Motor neuron (in vitro differentiated cells): ENCODE measurements at regions of chr2 and their contacts with region 1.

Region 1: DNA sequence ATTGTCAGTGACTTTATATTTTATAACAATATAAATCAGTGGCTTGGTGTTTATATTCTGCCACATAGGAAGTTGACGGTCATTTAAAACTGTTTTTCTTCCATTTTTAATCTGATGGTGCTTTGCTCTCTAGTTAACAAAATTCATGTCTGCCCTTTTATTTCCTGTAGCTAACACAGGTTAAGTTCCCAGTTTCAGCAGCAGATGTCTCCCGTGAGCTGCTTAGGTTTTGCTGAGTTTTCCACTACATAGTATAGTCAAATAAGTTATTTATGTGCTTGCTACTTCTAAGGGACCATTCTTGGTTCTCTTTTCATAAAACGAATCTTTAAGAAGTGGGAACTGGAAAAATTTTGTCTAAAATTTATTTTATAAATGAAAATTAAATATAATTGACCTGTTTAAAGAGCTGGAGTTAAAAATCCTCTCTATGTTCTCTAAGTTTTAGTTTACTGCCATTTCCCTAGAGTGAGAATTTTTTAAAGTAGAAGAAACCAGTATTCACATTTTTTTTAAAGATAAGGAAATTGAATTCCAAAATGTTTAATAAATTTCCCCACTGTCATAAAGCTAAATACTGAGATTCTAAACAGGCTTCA is 20.6 kb downstream of the HTR2B start:
- ATAC-seq: peak in 6 of 8 experiments; percentile 34 to 84 (median 66)
- H3K4me3 ChIP-seq: no peak overlapping the region
- H3K27ac ChIP-seq: no peak overlapping the region
- H3K4me1 ChIP-seq: no peaks in the 10 kb centered on the region

Region 2: GRCh38 chr2:231198291-231199173 is 94.3 kb after region 1 on chr2 and contains the start of gene ARMC9:
- in situ Hi-C with region 1: loop called in 1 of 9 experiments (anchors 10 kb)
- ATAC-seq: peak; percentile 78 to 97 (median 96)
- H3K4me3 ChIP-seq: peak within 1 kb of the TSS; percentile 63 to 92 (median 79)
- H3K27ac ChIP-seq: peak within 1 kb of the TSS; percentile 53 to 56
- H3K4me1 ChIP-seq: peaks cover 10 to 11% of the 10 kb centered on the region in 2 donors
- total RNA-seq, gene ARMC9: 7.2 to 22.6 (median 18.3) TPM

Region 3: DNA sequence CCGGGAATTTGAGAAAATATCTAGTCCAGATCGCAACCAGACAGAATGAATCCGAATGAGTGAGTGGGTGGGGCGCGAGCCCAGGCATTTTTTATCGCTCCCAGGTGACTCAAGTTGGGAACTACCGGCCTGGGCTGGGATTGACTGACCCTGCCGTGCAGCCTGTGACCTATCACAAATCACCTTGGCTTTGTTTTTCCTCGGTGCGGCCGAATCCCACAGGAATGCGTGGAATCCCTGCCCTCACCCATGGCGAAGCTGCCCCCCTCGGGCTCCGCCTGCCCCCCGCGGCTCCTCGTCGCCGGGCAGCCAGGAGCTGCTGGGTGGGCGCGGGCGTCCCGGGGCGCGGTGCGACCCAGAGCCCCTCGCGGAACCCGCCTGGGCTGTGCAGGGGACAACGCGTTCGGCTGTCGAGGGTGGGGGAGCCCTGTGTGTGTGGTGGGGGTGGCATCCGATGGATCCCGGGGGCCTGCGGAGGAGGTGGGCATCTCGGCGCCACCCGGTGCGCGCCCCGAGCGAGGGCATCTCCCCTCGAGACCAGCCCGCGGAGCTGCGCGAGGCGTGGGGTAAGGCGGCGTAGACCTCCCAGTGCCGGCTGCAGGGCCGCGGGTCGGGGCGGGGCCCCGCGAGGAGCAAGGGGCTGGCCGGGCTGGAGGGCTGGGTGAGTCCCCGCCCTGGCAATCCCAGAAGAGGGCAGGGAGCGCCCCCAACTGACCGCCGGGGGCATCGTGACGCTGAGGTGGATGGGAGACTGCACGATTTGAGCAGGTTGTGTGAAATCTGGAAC is 307.8 kb after region 1 on chr2:
- in situ Hi-C with region 1: loop called in 1 of 9 experiments (anchors 25 kb)
- ATAC-seq: peak; percentile 97 to 99 (median 98)
- H3K4me3 ChIP-seq: peak overlapping the region; percentile 31 to 44 (median 39)
- H3K27ac ChIP-seq: peak overlapping the region in 1 of 2 donors; percentile 16
- H3K4me1 ChIP-seq: peaks cover 9 to 25% of the 10 kb centered on the region in 2 donors

Region 4: GRCh38 chr2:231425811-231426728 is 321.9 kb after region 1 on chr2:
- in situ Hi-C with region 1: loop called in 3 of 9 experiments (anchors 25 kb)
- ATAC-seq: peak in 3 of 8 experiments; percentile 44 to 73 (median 44)
- H3K4me3 ChIP-seq: no peak overlapping the region
- H3K27ac ChIP-seq: no peak overlapping the region
- H3K4me1 ChIP-seq: no peaks in the 10 kb centered on the region